ENCODE measurements at regions of chr7 and their contacts with region 1.

Region 1: GRCh38 chr7:129210256-129210988 is 14.4 kb upstream of the AHCYL2 start:
- DNase-seq: no peak
- H3K4me3 ChIP-seq: no peak overlapping the region
- H3K27me3 ChIP-seq: no peaks in the 10 kb centered on the region
- CTCF ChIP-seq: peak; percentile 87

Region 2: DNA sequence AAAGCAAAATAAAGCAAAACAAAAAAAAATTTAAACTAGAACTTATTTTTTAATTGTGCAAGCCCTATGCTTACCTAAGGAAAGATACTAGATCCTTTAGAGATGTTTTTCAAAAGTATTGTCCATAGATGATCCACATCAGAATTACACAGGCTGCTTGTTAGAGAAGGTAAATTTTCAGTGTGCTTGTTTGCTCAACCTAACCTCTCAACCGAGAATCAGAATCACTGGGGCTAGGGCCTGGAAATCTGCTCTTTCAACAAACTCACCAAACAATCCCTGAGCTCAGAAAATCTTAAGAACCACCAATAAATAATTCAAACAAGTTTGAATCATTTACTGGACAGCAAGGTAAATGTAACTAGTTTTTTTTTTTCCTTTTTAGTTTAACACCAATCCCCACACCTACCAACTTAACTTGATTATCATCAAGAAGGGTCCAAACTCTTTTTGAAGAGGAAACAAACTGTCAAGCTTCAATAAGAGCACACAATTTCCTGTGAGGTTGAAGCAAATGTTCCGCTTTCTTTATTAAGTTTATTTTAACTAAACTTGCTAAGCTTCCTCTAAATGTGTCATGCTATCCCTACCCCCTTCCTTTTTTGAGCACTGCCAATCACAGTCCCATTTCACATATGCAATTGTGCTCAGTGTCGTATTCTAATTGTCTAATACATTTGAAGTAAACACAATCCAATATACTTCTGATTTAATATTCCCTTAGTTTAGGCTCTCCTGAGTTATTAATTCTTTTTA is 73.4 kb before region 1 on chr7:
- CTCF ChIA-PET with region 1: no interaction called
- POLR2A ChIA-PET with region 1: no interaction called
- DNase-seq: no peak
- H3K4me3 ChIP-seq: no peak overlapping the region
- H3K27me3 ChIP-seq: peaks cover 6% of the 10 kb centered on the region
- CTCF ChIP-seq: no peak

Region 3: DNA sequence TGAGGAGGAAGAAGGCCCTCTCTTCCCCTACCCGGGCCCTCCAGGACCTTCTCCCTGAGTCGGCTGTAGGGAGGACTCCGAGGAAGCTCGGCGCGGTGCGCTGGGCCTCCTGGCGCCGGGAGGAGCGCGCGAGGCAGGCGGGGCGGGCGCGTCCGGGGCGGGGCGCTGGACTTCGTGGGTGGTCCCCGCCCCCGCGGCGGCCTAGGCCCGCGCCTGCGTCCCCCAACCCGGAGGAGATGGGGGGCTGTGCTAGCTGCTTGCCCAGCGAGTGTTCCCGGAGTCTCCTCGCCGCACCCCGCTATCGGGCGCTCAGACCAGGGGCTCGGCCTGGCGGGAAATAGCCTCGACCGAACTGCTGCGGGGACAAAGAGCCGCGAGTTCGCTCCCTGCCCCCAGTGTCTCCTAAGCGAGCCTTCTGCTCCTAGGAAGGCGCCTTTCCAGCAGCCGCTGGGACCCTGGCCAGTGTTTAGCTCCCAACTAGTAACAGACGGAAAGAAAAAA is 41.2 kb before region 1 on chr7:
- CTCF ChIA-PET with region 1: interaction called, 186 read pairs
- POLR2A ChIA-PET with region 1: no interaction called
- DNase-seq: no peak
- H3K4me3 ChIP-seq: peak overlapping the region; percentile 42
- H3K27me3 ChIP-seq: peaks cover 14% of the 10 kb centered on the region
- CTCF ChIP-seq: no peak

Region 4: GRCh38 chr7:129197771-129198170 is 12.7 kb before region 1 on chr7:
- CTCF ChIA-PET with region 1: interaction called, 20 read pairs
- POLR2A ChIA-PET with region 1: no interaction called
- DNase-seq: no peak
- H3K4me3 ChIP-seq: no peak overlapping the region
- H3K27me3 ChIP-seq: no peaks in the 10 kb centered on the region
- CTCF ChIP-seq: no peak

Measured in BJ (cell line).